Activated naive CD4-positive, alpha-beta T cell treated with anti-CD3 and anti-CD28 coated beads for 36 hours (primary cell): ENCODE measurements at regions of chr3 and their contacts with region 1.

Region 1: GRCh38 chr3:59386165-59386564 is 336.3 kb upstream of the CFAP20DC start:
- DNase-seq: peak; percentile 24
- H3K4me3 Mint-ChIP-seq: no peak overlapping the region
- H3K27ac Mint-ChIP-seq: peak overlapping the region; percentile 63
- H3K4me1 Mint-ChIP-seq: peaks cover 70% of the 10 kb centered on the region
- H3K27me3 Mint-ChIP-seq: no peaks in the 10 kb centered on the region

Region 2: GRCh38 chr3:59326246-59327024 is 59.7 kb before region 1 on chr3:
- CTCF ChIA-PET with region 1: no interaction called
- intact Hi-C with region 1: no loop called
- DNase-seq: no peak
- H3K4me3 Mint-ChIP-seq: no peak overlapping the region
- H3K27ac Mint-ChIP-seq: no peak overlapping the region
- H3K4me1 Mint-ChIP-seq: no peaks in the 10 kb centered on the region
- H3K27me3 Mint-ChIP-seq: no peaks in the 10 kb centered on the region

Region 3: DNA sequence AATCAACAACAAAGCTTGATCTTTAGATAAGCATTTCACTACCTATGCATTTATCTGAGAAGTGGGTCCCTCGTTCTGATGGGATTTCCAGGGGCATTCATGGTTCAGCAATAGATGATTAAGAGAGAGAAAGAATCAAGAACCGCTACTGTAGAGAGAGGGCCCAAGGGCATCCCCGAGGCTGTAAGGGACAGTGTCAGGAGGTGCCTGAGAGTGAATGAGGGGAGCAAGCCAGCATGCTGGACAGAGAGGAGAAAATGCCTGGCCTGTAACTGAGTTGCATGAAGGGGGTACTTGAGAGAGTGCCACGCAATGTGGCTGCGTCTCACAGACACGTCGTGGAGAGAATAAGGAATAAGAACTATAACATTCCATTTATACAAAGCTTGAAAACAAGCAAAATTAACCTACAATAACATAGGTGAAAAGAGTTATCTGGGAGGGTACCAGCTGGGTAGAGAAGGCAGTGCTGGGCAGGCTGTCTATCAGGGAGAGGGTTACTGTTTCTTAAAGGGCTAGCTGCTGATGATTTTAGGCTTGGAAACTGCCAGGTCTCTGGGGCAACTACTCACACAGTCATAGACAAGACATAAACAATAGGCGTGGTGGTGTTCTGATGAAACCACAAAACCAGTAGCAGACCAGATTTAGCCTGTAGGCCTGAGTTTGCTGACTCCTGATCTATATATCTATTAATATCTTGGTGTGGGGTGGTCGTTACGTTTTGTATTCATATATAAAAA is 38.3 kb after region 1 on chr3:
- CTCF ChIA-PET with region 1: interaction called, 9 read pairs
- intact Hi-C with region 1: loop called (anchors 1 kb)
- DNase-seq: peak; percentile 34
- H3K4me3 Mint-ChIP-seq: no peak overlapping the region
- H3K27ac Mint-ChIP-seq: no peak overlapping the region
- H3K4me1 Mint-ChIP-seq: peaks cover 68% of the 10 kb centered on the region
- H3K27me3 Mint-ChIP-seq: peaks cover 4% of the 10 kb centered on the region

Region 4: GRCh38 chr3:59502806-59503205 is 116.6 kb after region 1 on chr3:
- CTCF ChIA-PET with region 1: no interaction called
- intact Hi-C with region 1: loop called (anchors 1 kb)
- DNase-seq: peak; percentile 73
- H3K4me3 Mint-ChIP-seq: no peak overlapping the region
- H3K27ac Mint-ChIP-seq: no peak overlapping the region
- H3K4me1 Mint-ChIP-seq: peaks cover 18% of the 10 kb centered on the region
- H3K27me3 Mint-ChIP-seq: no peaks in the 10 kb centered on the region

Region 5: GRCh38 chr3:59759298-59760031 is 373.3 kb after region 1 on chr3:
- CTCF ChIA-PET with region 1: no interaction called
- intact Hi-C with region 1: loop called (anchors 2 kb)
- DNase-seq: peak; percentile 55
- H3K4me3 Mint-ChIP-seq: no peak overlapping the region
- H3K27ac Mint-ChIP-seq: no peak overlapping the region
- H3K4me1 Mint-ChIP-seq: peaks cover 86% of the 10 kb centered on the region
- H3K27me3 Mint-ChIP-seq: no peaks in the 10 kb centered on the region

Region 6: GRCh38 chr3:60010781-60011180 is 624.6 kb after region 1 on chr3:
- CTCF ChIA-PET with region 1: no interaction called
- intact Hi-C with region 1: loop called (anchors 2 kb)
- DNase-seq: peak; percentile 80
- H3K4me3 Mint-ChIP-seq: peak overlapping the region; percentile 75
- H3K27ac Mint-ChIP-seq: peak overlapping the region; percentile 97
- H3K4me1 Mint-ChIP-seq: peaks cover 87% of the 10 kb centered on the region
- H3K27me3 Mint-ChIP-seq: no peaks in the 10 kb centered on the region